H1 (cell line): ENCODE measurements at regions of chr7 and their contacts with region 1.

Region 1: GRCh38 chr7:32062150-32062549 is 8.1 kb downstream of the PDE1C start:
- DNase-seq: peak in 1 of 2 experiments; percentile 86
- H3K4me3 ChIP-seq: no peak overlapping the region
- H3K27ac ChIP-seq: no peak overlapping the region
- H3K4me1 ChIP-seq: peaks cover 0 to 7% (median 5%) of the 10 kb centered on the region in 4 experiments; a peak in 4 of 7 replicates
- H3K27me3 ChIP-seq: peaks cover 0 to 2% (median under 1%) of the 10 kb centered on the region in 4 experiments; a peak in 2 of 7 replicates
- CTCF ChIP-seq: peak; percentile 73 to 88 (median 82)
- EP300 ChIP-seq: no peak
- POLR2A ChIP-seq: no peak
- RAD21 ChIP-seq: peak; percentile 64 to 75

Region 2: GRCh38 chr7:32051128-32051527 is 11.0 kb before region 1 on chr7:
- CTCF ChIA-PET with region 1: interaction called, 16 read pairs
- POLR2A ChIA-PET with region 1: no interaction called
- DNase-seq: no peak
- H3K4me3 ChIP-seq: no peak overlapping the region
- H3K27ac ChIP-seq: no peak overlapping the region
- H3K4me1 ChIP-seq: no peaks in the 10 kb centered on the region
- H3K27me3 ChIP-seq: peaks cover 0 to 1% (median 0%) of the 10 kb centered on the region in 4 experiments; a peak in 1 of 7 replicates
- CTCF ChIP-seq: no peak
- EP300 ChIP-seq: no peak
- POLR2A ChIP-seq: no peak
- RAD21 ChIP-seq: no peak